ENCODE measurements at regions of chr16 and their contacts with region 1.

Region 1: DNA sequence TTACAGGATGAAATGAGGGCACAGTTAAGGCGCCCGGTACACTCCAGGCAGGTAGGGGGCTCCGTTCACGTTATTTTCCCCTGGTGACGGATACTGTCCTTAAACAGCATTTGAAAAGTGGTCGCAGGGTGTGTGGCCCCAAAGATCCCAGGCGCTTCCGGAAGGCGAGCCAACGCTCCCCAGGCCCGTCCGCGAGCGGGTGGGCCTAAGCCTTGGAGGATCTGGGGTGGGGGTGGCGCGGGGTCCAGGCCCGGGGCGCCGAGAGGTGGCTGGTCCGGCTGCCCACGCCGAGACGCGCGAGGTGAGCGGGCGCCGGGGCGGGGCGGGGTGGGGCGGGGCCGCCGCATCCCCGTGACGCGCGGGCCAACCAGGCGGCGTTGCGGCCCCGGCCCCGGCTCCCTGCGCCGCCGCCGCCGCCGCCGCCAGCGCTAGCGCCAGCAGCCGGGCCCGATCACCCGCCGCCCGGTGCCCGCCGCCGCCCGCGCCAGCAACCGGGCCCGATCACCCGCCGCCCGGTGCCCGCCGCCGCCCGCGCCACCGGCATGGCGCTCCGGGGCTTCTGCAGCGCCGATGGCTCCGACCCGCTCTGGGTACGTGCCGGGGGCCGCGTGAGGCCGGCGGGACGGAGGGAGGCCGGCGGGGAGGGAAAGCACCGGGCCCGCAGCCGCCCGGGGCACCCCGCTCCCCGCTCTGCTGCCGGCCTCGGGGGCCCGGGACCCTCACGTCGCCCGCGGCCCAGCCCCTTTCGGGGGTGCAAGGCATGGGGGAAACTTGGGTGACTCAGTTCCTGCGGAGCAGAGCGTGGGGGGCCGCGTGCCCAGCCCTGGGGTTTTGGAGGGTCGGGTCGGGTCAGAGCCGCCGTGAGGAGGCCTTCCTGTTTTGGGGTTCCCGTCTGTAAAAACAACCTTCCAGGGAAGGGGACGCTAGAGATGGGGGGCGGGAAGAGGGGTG is at the start of gene ABCC1:
- DNase-seq: peak; percentile 48
- ATAC-seq: peak; percentile 71 to 91
- total RNA-seq, gene ABCC1: 16.2 to 20.9 TPM

Region 2: DNA sequence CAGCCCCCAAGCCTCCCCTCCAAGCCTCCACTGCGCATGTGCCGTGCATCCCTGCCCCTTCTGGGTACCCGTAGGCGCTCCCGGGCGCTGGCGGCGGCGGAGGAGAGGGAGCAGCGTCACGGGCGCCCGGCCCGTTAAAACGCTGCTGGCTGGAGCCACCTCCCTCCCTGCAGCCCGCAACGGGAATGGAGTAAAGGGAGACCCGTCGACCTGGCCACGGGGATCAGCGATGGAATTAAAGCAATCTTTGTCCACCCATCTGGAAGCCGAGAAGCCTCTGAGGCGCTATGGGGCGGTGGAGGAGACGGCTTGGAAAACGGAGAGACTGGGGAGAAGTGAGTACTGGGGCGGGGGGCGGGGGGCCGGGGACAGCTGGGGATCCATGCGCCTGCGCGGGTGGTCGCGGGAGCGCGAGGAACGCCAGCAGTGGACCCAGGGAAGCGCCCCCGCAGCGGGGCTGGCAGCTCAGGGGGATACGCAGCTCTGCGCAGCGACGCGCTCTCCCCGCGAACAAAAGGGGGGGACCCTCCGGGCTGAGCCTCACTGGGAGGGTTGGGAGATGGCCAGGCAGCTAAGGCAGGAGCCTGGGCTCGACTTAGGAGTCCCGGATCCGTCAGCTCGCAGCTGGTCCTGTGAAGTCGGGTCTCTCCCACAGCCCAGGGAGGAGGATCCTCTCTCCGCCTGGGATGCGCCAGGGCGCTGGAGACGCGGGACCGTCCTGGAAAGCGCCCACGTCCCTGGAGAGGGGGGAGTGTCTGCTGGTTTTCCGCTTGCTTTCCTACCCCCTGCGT is 514.9 kb before region 1 on chr16 and contains the start of gene BMERB1:
- intact Hi-C with region 1: no loop called
- DNase-seq: peak; percentile 85
- ATAC-seq: peak; percentile 96 to 98
- total RNA-seq, gene BMERB1: 50.0 to 74.3 TPM

Region 3: GRCh38 chr16:15777533-15778203 is 171.8 kb before region 1 on chr16:
- intact Hi-C with region 1: no loop called
- DNase-seq: no peak
- ATAC-seq: peak in 1 of 2 donors; percentile 29

Region 4: GRCh38 chr16:15899538-15900100 is 49.9 kb before region 1 on chr16:
- intact Hi-C with region 1: loop called in 1 of 2 experiments (anchors 10 kb)
- DNase-seq: no peak
- ATAC-seq: peak; percentile 50 to 95

Region 5: GRCh38 chr16:16021988-16022682 is 72.7 kb after region 1 on chr16:
- intact Hi-C with region 1: loop called in 1 of 2 experiments (anchors 2 kb)
- DNase-seq: peak; percentile 98
- ATAC-seq: peak; percentile 97 to 99

Region 6: GRCh38 chr16:16052916-16053315 is 103.4 kb after region 1 on chr16:
- intact Hi-C with region 1: loop called in 1 of 2 experiments (anchors 10 kb)
- DNase-seq: no peak
- ATAC-seq: no peak

Region 7: DNA sequence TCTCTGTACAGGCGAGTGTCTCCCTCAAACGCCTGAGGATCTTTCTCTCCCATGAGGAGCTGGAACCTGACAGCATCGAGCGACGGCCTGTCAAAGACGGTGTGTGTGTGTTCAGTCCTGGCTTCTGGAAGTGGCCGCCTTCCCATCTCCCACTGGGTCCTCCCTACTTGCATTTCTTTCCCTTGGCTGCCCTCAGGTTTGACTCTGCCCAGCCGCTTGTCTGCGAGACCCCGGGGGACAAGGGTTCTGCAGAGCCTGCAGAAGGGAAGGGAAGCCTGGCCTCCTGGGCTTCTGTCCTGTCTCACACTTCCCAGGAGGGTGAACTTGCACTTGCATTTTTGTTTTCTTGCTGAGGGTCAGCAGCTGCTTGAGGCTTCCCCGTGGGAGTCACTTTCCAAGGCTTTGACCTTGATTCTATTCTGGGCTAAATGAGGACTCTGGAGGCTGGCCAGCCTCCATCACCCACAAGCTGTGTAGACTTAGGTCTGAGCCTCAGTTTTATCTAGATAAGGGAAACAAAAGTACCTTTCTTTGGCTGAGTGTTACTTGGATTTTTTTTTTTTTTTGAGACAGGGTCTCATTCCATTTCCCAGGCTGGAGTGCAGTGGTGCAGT is 122.3 kb after region 1 on chr16:
- intact Hi-C with region 1: no loop called
- DNase-seq: no peak
- ATAC-seq: peak; percentile 61 to 69